ENCODE measurements at regions of chr3 and their contacts with region 1.

Region 1: DNA sequence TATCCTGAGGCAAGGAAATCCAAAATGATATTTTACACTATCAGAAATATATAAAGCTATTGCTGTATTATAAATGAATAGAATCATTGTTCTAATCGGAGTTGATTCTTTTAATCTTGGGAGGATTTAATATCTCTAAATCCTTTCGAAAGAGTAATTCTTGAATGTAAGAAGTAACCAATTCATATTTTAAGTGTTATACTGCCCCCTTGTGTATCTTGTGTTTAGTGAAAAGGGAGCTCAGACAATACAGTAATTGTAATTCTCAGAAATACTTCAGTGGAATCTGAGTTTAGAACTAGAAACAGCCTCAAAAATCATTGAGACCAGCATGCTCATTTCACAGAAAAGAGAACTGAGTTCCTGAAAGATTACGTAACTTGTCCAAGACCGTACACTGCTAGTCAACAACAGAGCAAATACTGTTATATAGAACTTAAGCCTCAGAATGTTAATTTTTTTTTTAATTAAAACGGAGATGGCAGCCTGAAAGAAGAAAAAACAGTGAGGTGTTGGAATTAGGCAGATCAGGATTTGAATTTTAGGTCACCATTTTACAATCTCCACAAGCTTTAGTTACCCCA is 42.9 kb downstream of the PLCH1 start:
- DNase-seq: peak in 1 of 2 donors; percentile 74
- H3K4me3 ChIP-seq: no peak overlapping the region
- H3K27ac ChIP-seq: peak overlapping the region in 1 of 5 donors; percentile 15
- H3K4me1 ChIP-seq: no peaks in the 10 kb centered on the region
- H3K27me3 ChIP-seq: no peaks in the 10 kb centered on the region
- CTCF ChIP-seq: peak in 5 of 7 experiments; percentile 41 to 79 (median 64)
- EP300 ChIP-seq: no peak
- POLR2A ChIP-seq: no peak

Region 2: GRCh38 chr3:155352900-155353490 is 349.0 kb before region 1 on chr3:
- intact Hi-C with region 1: loop called (anchors 10 kb)
- DNase-seq: peak in 1 of 2 donors; percentile 64
- H3K4me3 ChIP-seq: no peak overlapping the region
- H3K27ac ChIP-seq: no peak overlapping the region
- H3K4me1 ChIP-seq: no peaks in the 10 kb centered on the region
- H3K27me3 ChIP-seq: no peaks in the 10 kb centered on the region
- CTCF ChIP-seq: peak in 4 of 7 experiments; percentile 20 to 55 (median 32)
- EP300 ChIP-seq: no peak
- POLR2A ChIP-seq: no peak

Region 3: GRCh38 chr3:155382396-155383042 is 319.5 kb before region 1 on chr3:
- intact Hi-C with region 1: loop called (anchors 10 kb)
- DNase-seq: peak; percentile 82 to 88
- H3K4me3 ChIP-seq: no peak overlapping the region
- H3K27ac ChIP-seq: no peak overlapping the region
- H3K4me1 ChIP-seq: no peaks in the 10 kb centered on the region
- H3K27me3 ChIP-seq: no peaks in the 10 kb centered on the region
- CTCF ChIP-seq: peak in 5 of 7 experiments; percentile 22 to 65 (median 52)
- EP300 ChIP-seq: no peak
- POLR2A ChIP-seq: no peak

Region 4: GRCh38 chr3:155778462-155778861 is 76.5 kb after region 1 on chr3:
- intact Hi-C with region 1: no loop called
- DNase-seq: no peak
- H3K4me3 ChIP-seq: no peak overlapping the region
- H3K27ac ChIP-seq: no peak overlapping the region
- H3K4me1 ChIP-seq: no peaks in the 10 kb centered on the region
- H3K27me3 ChIP-seq: no peaks in the 10 kb centered on the region
- CTCF ChIP-seq: no peak
- EP300 ChIP-seq: no peak
- POLR2A ChIP-seq: no peak